H1 (cell line): ENCODE measurements at regions of chr11 and their contacts with region 1.

Region 1: DNA sequence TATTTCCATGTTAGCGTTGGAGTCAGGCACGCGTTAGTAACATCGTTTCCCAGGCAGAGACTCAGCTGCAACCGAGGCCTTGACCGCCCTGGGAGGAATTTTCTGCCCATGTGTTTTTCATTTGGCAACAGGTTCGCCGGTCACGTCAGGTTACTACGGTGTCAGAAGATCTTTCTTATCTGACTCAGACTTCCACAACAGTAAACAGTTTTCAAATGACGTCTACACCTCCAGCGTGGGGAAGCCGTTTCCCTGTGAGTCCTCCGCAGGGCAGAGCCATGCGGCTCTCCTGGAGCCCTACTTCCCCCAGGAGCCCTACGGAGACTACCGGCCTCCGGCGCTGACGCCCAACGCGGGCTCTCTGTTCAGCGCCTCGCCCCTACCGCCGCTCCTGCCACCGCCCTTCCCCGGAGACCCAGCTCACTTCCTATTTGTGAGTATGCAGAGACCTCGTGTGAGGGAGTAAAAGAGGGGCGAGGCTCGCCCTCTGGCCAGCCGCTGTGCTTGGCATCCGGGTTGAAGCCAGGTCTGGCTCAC is 14.3 kb upstream of the POU2AF3 start:
- DNase-seq: no peak
- H3K4me3 ChIP-seq: no peak overlapping the region
- H3K27ac ChIP-seq: no peak overlapping the region
- H3K4me1 ChIP-seq: peaks cover 0 to 3% (median 0%) of the 10 kb centered on the region in 4 experiments; a peak in 2 of 7 replicates
- H3K27me3 ChIP-seq: no peaks in the 10 kb centered on the region
- CTCF ChIP-seq: no peak
- EP300 ChIP-seq: no peak
- POLR2A ChIP-seq: no peak
- RAD21 ChIP-seq: no peak

Region 2: DNA sequence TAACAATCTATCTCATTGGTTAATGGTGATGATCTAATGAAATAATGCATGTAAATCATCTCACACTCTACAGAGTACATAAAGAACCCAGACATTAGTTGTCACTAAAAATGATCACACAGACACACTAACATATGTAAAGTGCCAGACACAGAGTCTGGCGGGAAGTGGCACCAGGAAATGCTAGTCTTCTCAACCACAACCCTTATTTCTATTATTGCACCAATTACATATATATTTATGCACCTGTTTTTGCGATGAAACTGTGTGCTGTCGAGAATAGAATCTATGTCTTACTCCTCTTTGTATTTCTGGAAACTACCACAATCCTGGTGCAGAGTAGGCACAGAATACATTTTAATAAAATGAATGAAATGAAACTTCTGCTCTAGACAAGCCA is 11.6 kb before region 1 on chr11:
- CTCF ChIA-PET with region 1: interaction called, 12 read pairs
- POLR2A ChIA-PET with region 1: no interaction called
- DNase-seq: no peak
- H3K4me3 ChIP-seq: no peak overlapping the region
- H3K27ac ChIP-seq: no peak overlapping the region
- H3K4me1 ChIP-seq: no peaks in the 10 kb centered on the region
- H3K27me3 ChIP-seq: no peaks in the 10 kb centered on the region
- CTCF ChIP-seq: no peak
- EP300 ChIP-seq: no peak
- POLR2A ChIP-seq: no peak
- RAD21 ChIP-seq: no peak

Region 3: DNA sequence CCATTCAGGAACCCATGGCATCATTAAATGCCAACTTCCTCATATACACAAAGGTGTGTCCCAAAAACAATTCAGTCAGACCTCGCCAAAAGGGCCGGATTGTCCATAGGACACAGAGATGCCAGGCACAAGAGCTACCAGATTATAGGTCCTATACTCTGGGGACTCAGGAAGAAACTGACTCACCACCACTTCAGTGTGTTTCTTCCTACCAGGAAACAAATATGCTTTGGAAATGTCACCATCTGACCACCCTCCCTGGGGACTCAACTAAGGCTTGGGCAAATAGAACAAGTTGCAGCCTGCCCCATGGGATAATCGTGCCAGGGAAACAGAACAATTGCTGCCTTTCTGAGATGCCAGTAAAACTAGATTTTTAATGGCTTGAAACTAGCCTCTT is 26.1 kb after region 1 on chr11:
- CTCF ChIA-PET with region 1: interaction called, 17 read pairs
- POLR2A ChIA-PET with region 1: no interaction called
- DNase-seq: no peak
- H3K4me3 ChIP-seq: no peak overlapping the region
- H3K27ac ChIP-seq: no peak overlapping the region
- H3K4me1 ChIP-seq: no peaks in the 10 kb centered on the region
- H3K27me3 ChIP-seq: no peaks in the 10 kb centered on the region
- CTCF ChIP-seq: no peak
- EP300 ChIP-seq: no peak
- POLR2A ChIP-seq: no peak
- RAD21 ChIP-seq: no peak

Region 4: DNA sequence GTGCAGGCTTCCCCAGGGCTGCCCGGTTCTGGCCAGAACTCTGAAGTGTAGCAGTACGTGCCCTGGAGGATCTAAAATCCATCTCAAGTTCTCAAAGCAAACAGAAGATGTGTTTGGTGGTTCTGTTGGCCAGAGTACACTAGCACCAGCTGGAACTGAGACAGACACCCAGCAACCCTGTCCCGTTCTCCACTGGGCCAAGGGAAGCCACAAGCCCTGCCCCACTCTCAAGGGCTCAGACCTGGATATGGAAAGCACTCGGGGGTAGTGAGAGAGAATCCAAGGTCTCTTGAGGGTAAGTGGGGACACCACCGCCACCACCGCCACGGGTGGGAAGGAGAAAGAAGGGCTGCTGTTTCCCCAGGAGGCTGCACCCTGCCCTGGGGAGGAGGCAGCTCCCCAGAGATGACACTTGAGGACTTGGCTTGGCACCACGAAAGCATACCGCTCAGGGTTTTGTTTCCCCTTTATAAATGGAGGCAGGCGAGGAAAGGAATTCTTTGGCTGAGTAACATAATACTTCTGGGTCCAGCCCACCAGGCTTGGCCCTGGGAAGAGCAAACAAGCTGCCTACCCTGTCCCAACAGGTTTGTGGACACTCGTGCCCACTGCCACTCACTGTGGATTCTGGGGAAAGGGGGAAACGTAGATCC is 151.2 kb after region 1 on chr11:
- CTCF ChIA-PET with region 1: interaction called, 484 read pairs
- POLR2A ChIA-PET with region 1: interaction called, 3 read pairs
- DNase-seq: no peak
- H3K4me3 ChIP-seq: no peak overlapping the region
- H3K27ac ChIP-seq: no peak overlapping the region
- H3K4me1 ChIP-seq: peaks cover 0 to 12% (median 6%) of the 10 kb centered on the region in 4 experiments; a peak in 4 of 7 replicates
- H3K27me3 ChIP-seq: 0 out of 7 replicates have a peak, but pooled peaks cover 0 to 2% (median 0%) of the 10 kb centered on the region in 4 experiments
- CTCF ChIP-seq: no peak
- EP300 ChIP-seq: no peak
- POLR2A ChIP-seq: no peak
- RAD21 ChIP-seq: no peak

Region 5: GRCh38 chr11:111446404-111447111 is 162.5 kb after region 1 on chr11:
- CTCF ChIA-PET with region 1: interaction called, 50 read pairs
- POLR2A ChIA-PET with region 1: no interaction called
- DNase-seq: peak in 1 of 2 experiments; percentile 63
- H3K4me3 ChIP-seq: no peak overlapping the region
- H3K27ac ChIP-seq: no peak overlapping the region
- H3K4me1 ChIP-seq: peaks cover 0 to 6% (median 2%) of the 10 kb centered on the region in 4 experiments; a peak in 4 of 7 replicates
- H3K27me3 ChIP-seq: no peaks in the 10 kb centered on the region
- CTCF ChIP-seq: peak; percentile 88 to 95 (median 88)
- EP300 ChIP-seq: no peak
- POLR2A ChIP-seq: no peak
- RAD21 ChIP-seq: peak; percentile 95 to 98